Activated CD4-positive, alpha-beta T cell treated with anti-CD3 and anti-CD28 coated beads for 36 hours (primary cell): ENCODE measurements at regions of chr4 and their contacts with region 1.

Region 1: GRCh38 chr4:74659576-74660411 is 134.5 kb downstream of the BTC start:
- DNase-seq: peak; percentile 15
- ATAC-seq: peak; percentile 78
- H3K4me3 Mint-ChIP-seq: no peak overlapping the region
- H3K27ac Mint-ChIP-seq: peak overlapping the region; percentile 42
- H3K4me1 Mint-ChIP-seq: peaks cover 25% of the 10 kb centered on the region
- H3K27me3 Mint-ChIP-seq: peaks cover 7% of the 10 kb centered on the region

Region 2: DNA sequence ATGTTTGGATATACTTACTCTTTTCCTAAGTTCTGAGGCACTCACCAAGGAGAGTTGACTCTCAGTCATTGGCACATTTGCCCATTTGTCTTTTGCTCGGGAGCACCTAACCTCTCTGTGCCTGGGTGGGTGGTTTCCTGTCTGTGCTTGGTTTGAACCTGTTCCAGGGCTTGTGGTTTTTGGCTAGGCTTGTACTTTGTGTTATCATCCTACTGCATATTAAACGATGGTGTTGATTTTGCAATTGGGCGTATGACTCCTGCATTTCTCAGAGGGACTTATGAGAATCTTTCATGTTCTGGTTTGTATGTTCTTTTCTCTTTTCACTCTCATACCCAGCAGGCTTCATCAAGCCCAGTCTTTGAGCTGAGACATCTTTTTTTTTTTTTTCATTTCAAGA is 27.2 kb before region 1 on chr4:
- CTCF ChIA-PET with region 1: interaction called, 3 read pairs
- POLR2A ChIA-PET with region 1: no interaction called
- intact Hi-C with region 1: loop called (anchors 1 to 5 kb)
- DNase-seq: peak; percentile 73
- ATAC-seq: peak; percentile 94
- H3K4me3 Mint-ChIP-seq: no peak overlapping the region
- H3K27ac Mint-ChIP-seq: no peak overlapping the region
- H3K4me1 Mint-ChIP-seq: peaks cover 19% of the 10 kb centered on the region
- H3K27me3 Mint-ChIP-seq: peaks cover 1% of the 10 kb centered on the region